ENCODE measurements at regions of chr17 and their contacts with region 1.

Region 1: GRCh38 chr17:8745586-8746500 is 1.2 kb upstream of the CCDC42 start:
- DNase-seq: peak; percentile 29
- ATAC-seq: peak; percentile 97
- H3K4me3 ChIP-seq: peak overlapping the region; percentile 52
- H3K27ac ChIP-seq: peak overlapping the region; percentile 53
- H3K4me1 ChIP-seq: no peaks in the 10 kb centered on the region
- H3K27me3 ChIP-seq: peaks cover 14% of the 10 kb centered on the region
- CTCF ChIP-seq: peak; percentile 76
- POLR2A ChIP-seq: no peak
- RAD21 ChIP-seq: peak; percentile 89

Region 2: DNA sequence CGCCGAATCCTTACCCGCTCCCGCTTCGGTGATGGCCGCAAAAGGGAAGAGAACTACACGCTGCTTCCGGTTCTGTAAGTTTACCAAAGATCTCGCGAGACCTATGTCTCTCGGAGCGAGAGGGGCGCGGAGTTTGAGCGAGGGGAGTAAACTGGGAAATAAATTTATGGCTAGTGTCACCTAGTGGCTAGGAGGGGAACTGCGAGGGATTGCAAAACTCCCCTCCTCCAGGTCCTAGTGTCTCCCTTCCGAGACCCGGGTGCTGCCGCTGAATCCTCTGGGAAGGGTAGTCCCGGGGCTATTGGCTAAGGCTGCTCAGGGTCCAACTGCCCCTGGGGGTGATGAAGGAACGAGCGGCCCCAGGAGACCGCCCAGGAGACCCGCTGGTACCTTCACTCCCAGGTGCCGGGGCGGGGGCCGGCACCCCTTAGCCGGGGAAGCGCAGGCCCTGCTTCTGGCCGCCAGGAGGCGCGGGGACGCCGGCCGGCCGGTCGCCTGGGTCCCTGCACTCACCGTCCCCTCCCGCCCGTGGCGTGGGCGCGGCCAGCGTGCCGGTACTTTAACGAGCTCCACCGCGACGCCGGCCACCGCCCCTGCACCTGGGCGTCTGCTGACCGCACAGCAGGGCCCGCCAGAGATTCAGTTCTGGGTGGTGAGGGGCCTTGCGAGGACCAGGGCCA is 362.6 kb before region 1 on chr17 and contains the start of gene RPL26:
- CTCF ChIA-PET with region 1: no interaction called
- POLR2A ChIA-PET with region 1: no interaction called
- dilution Hi-C with region 1: no loop called
- in situ Hi-C with region 1: no loop called
- intact Hi-C with region 1: loop called (anchors 1 kb)
- DNase-seq: peak; percentile 98
- ATAC-seq: peak; percentile 86
- H3K4me3 ChIP-seq: peak within 1 kb of the TSS; percentile 98
- H3K27ac ChIP-seq: peak within 1 kb of the TSS; percentile 89
- H3K4me1 ChIP-seq: peaks cover 14% of the 10 kb centered on the region
- H3K27me3 ChIP-seq: no peaks in the 10 kb centered on the region
- CTCF ChIP-seq: peak; percentile 84
- POLR2A ChIP-seq: peak; percentile 99
- RAD21 ChIP-seq: peak; percentile 28; the same call in 1 of the 2 replicates
- total RNA-seq, gene RPL26: 5,013 and 5,721 TPM in 2 replicates

Region 3: DNA sequence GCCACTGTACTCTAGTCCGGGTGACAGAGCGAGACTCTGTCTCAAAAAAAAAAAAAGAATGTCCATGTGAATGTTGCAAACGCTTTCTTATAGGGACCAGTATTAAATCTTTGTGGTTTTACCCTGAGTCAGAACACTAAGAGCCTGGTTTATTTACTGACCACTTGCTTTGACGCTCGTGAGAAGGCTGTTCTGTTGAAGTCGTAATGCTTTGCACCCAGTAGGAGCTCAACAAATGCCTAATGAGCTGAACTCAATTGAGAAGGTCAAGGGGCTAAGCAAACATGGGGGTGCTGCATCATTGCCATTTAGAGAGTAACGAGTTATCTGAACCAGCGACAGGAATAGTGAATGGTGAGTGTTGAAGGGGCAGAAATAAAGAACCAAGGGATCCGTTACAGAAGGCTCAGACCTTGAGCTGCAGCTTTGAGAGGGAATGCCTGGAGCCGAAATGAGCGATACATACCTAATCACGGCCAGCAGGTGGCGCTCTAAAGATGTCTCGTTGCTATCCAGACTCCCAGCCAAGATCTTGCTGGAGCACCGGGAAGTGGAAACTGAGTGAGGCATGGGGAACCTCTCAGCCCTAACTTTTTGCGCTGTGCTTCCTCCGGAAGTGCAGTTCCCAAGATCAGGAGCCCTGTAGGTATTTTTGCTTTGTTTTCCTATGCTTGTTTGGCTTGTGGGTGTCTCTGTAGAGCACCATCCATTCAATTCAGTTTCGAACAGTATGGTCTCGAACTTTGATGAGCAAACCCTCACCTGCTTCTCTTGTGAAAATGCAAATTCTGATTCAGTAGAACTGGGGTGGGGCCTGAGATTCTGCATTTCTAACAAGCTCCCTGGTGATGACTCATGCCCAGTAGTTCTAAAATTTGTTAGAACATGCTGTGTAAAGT is 335.6 kb before region 1 on chr17:
- CTCF ChIA-PET with region 1: interaction called, 5 read pairs
- POLR2A ChIA-PET with region 1: no interaction called
- dilution Hi-C with region 1: no loop called
- in situ Hi-C with region 1: loop called (anchors 10 kb)
- intact Hi-C with region 1: loop called (anchors 1 kb)
- DNase-seq: peak; percentile 82
- ATAC-seq: peak; percentile 99
- H3K4me3 ChIP-seq: no peak overlapping the region
- H3K27ac ChIP-seq: no peak overlapping the region
- H3K4me1 ChIP-seq: no peaks in the 10 kb centered on the region
- H3K27me3 ChIP-seq: peaks cover 11% of the 10 kb centered on the region
- CTCF ChIP-seq: peak; percentile 86
- POLR2A ChIP-seq: no peak
- RAD21 ChIP-seq: peak; percentile 76

Region 4: DNA sequence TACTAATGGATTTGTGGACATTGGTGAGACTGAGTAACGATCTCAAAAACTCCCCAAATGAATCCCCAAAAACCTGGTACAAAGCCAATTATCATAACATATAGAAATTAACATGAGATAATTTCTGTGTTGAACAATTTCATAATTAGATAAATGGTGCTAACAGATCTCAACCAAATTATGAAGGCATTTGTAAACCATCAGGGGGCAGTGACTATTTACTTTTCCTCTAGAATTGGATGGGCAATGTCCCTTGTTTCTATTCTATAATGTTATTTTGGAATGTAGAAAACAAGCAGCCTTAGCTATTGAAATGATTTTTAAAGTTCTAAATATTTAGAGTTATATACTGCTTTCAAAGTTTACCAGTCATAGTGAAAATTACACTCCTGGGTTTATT is 173.1 kb before region 1 on chr17:
- CTCF ChIA-PET with region 1: no interaction called
- POLR2A ChIA-PET with region 1: no interaction called
- dilution Hi-C with region 1: no loop called
- in situ Hi-C with region 1: loop called (anchors 10 kb)
- intact Hi-C with region 1: loop called (anchors 2 kb)
- DNase-seq: no peak
- ATAC-seq: no peak
- H3K4me3 ChIP-seq: no peak overlapping the region
- H3K27ac ChIP-seq: no peak overlapping the region; the same call in 1 of the 2 replicates
- H3K4me1 ChIP-seq: no peaks in the 10 kb centered on the region
- H3K27me3 ChIP-seq: no peaks in the 10 kb centered on the region
- CTCF ChIP-seq: peak; percentile 38
- POLR2A ChIP-seq: no peak
- RAD21 ChIP-seq: peak; percentile 43

Region 5: GRCh38 chr17:8785547-8786413 is 39.9 kb after region 1 on chr17:
- CTCF ChIA-PET with region 1: no interaction called
- POLR2A ChIA-PET with region 1: no interaction called
- dilution Hi-C with region 1: no loop called
- in situ Hi-C with region 1: no loop called
- intact Hi-C with region 1: loop called (anchors 1 kb)
- DNase-seq: peak; percentile 56
- ATAC-seq: peak; percentile 98
- H3K4me3 ChIP-seq: no peak overlapping the region
- H3K27ac ChIP-seq: no peak overlapping the region
- H3K4me1 ChIP-seq: no peaks in the 10 kb centered on the region
- H3K27me3 ChIP-seq: no peaks in the 10 kb centered on the region; the same call in 1 of the 2 replicates
- CTCF ChIP-seq: peak; percentile 80
- POLR2A ChIP-seq: no peak
- RAD21 ChIP-seq: peak; percentile 89

Measured in IMR-90 (cell line).